IMR-90 (cell line): ENCODE measurements at regions of chr4 and their contacts with region 1.

Region 1: GRCh38 chr4:153127760-153128494 is 76.3 kb upstream of the TRIM2 start:
- DNase-seq: peak; percentile 77
- ATAC-seq: peak; percentile 95
- H3K4me3 ChIP-seq: no peak overlapping the region
- H3K27ac ChIP-seq: no peak overlapping the region
- H3K4me1 ChIP-seq: no peaks in the 10 kb centered on the region
- H3K27me3 ChIP-seq: no peaks in the 10 kb centered on the region
- CTCF ChIP-seq: peak; percentile 94
- POLR2A ChIP-seq: no peak
- RAD21 ChIP-seq: peak; percentile 91

Region 2: DNA sequence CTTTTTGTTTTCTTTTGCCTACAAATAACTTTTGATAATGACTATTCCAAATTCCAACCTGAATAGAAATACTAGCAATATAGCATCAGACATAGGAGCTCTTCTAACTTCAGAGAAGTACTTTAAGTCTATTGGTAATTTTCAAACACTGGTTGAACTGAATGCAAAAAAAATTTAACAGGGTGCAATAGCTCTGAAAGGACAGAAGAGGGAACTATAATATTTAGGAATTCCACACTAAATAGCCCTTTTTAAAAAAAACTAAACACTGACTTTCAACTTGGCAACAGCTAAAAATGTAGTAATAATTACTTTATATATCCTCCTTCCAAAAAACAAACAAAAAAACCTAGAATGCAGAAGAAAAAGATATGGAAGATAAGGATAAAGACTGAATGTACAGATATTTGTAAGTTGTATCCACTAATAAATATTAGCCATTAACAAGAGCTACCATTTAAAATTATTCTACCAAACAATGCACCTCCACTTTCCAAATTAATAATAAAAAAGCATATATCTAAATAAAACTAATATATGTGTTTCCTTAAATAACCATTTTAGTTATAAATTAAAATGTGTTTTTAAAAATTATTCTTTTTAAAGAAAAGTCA is 673.4 kb before region 1 on chr4:
- CTCF ChIA-PET with region 1: no interaction called
- POLR2A ChIA-PET with region 1: no interaction called
- dilution Hi-C with region 1: no loop called
- in situ Hi-C with region 1: no loop called
- intact Hi-C with region 1: loop called (anchors 2 kb)
- DNase-seq: peak; percentile 46
- ATAC-seq: peak; percentile 66
- H3K4me3 ChIP-seq: no peak overlapping the region
- H3K27ac ChIP-seq: no peak overlapping the region
- H3K4me1 ChIP-seq: peaks cover 5% of the 10 kb centered on the region; the same call in 1 of the 2 replicates
- H3K27me3 ChIP-seq: no peaks in the 10 kb centered on the region
- CTCF ChIP-seq: peak; percentile 77
- POLR2A ChIP-seq: no peak
- RAD21 ChIP-seq: peak; percentile 67

Region 3: GRCh38 chr4:152850377-152850776 is 277.6 kb before region 1 on chr4:
- CTCF ChIA-PET with region 1: interaction called, 10 read pairs
- POLR2A ChIA-PET with region 1: no interaction called
- dilution Hi-C with region 1: no loop called
- in situ Hi-C with region 1: loop called (anchors 10 kb)
- intact Hi-C with region 1: loop called (anchors 1 kb)
- DNase-seq: peak; percentile 54
- ATAC-seq: no peak
- H3K4me3 ChIP-seq: no peak overlapping the region
- H3K27ac ChIP-seq: no peak overlapping the region
- H3K4me1 ChIP-seq: peaks cover 2% of the 10 kb centered on the region
- H3K27me3 ChIP-seq: no peaks in the 10 kb centered on the region
- CTCF ChIP-seq: no peak
- POLR2A ChIP-seq: no peak
- RAD21 ChIP-seq: no peak

Region 4: DNA sequence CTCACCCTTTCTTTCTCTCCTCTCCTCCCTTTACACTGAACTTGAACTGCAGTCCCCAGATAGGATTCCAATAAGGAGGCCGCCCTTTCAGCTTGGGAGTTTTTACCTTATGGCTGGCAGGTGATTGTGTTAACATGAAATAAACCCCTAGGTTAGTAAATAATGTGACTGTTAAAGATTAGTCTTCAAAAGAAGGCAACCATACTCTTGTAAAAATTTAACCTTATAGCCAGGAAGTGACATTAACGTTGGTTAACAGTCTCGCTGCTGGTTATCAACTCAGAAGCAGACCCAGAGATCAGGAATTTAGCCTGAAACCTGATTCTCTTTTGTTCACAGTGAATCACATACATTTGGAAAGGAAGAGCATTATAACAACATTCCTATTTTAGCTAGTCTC is 176.6 kb before region 1 on chr4:
- CTCF ChIA-PET with region 1: no interaction called
- POLR2A ChIA-PET with region 1: no interaction called
- dilution Hi-C with region 1: no loop called
- in situ Hi-C with region 1: no loop called
- intact Hi-C with region 1: no loop called
- DNase-seq: peak; percentile 61
- ATAC-seq: peak; percentile 80
- H3K4me3 ChIP-seq: no peak overlapping the region
- H3K27ac ChIP-seq: no peak overlapping the region
- H3K4me1 ChIP-seq: peaks cover 4% of the 10 kb centered on the region; the same call in 1 of the 2 replicates
- H3K27me3 ChIP-seq: peaks cover 7% of the 10 kb centered on the region
- CTCF ChIP-seq: no peak
- POLR2A ChIP-seq: no peak
- RAD21 ChIP-seq: no peak